ENCODE measurements at regions of chr1 and their contacts with region 1.

Region 1: GRCh38 chr1:21865943-21866706 is 54.1 kb downstream of the LDLRAD2 start:
- DNase-seq: no peak
- H3K4me3 ChIP-seq: no peak overlapping the region
- H3K27ac ChIP-seq: no peak overlapping the region
- H3K4me1 ChIP-seq: peaks cover 5% of the 10 kb centered on the region
- H3K27me3 ChIP-seq: no peaks in the 10 kb centered on the region
- CTCF ChIP-seq: no peak
- EP300 ChIP-seq: no peak
- POLR2A ChIP-seq: no peak

Region 2: DNA sequence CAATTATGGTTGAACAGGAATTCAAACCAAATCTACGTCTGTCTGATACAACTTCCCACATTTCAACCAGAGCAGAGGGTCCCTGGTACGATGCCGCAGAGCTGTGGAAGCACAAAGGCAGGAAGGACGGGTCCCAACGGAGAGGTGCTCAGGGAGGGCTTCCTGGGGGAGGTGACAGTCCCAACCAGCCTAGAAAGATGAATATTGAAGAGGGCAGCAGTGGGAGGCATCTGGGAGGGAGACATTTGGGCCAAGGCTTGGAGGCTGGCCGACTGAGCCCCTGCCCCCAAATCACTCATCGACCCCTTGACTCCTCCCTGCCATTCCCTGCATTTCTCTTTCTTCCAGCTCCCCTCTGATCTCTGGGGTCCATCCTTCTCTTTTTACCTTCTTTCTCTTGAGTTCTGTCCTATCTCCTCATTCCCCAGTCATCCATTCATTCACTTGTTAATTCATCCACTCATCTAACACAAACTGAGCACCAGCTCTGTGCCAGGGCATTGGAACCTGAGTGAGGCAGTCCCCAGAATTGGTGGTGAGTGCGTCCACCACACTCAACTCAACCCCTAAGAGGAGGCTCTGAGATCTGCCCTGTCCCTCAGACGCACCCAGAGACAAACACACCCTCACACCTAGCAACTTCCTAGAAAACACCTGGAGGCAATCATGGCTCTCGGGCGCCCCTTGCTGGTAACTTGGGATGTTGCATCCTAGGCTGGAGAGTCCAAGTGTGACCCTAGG is 97.5 kb after region 1 on chr1:
- intact Hi-C with region 1: loop called in 2 of 4 experiments (anchors 10 kb)
- DNase-seq: peak; percentile 63 to 86 (median 80)
- H3K4me3 ChIP-seq: no peak overlapping the region
- H3K27ac ChIP-seq: no peak overlapping the region
- H3K4me1 ChIP-seq: no peaks in the 10 kb centered on the region
- H3K27me3 ChIP-seq: no peaks in the 10 kb centered on the region
- CTCF ChIP-seq: peak; percentile 78 to 87 (median 83)
- EP300 ChIP-seq: no peak
- POLR2A ChIP-seq: no peak

Measured in ovary (tissue), 10 donors.